ENCODE measurements at regions of chr14 and their contacts with region 1.

Region 1: DNA sequence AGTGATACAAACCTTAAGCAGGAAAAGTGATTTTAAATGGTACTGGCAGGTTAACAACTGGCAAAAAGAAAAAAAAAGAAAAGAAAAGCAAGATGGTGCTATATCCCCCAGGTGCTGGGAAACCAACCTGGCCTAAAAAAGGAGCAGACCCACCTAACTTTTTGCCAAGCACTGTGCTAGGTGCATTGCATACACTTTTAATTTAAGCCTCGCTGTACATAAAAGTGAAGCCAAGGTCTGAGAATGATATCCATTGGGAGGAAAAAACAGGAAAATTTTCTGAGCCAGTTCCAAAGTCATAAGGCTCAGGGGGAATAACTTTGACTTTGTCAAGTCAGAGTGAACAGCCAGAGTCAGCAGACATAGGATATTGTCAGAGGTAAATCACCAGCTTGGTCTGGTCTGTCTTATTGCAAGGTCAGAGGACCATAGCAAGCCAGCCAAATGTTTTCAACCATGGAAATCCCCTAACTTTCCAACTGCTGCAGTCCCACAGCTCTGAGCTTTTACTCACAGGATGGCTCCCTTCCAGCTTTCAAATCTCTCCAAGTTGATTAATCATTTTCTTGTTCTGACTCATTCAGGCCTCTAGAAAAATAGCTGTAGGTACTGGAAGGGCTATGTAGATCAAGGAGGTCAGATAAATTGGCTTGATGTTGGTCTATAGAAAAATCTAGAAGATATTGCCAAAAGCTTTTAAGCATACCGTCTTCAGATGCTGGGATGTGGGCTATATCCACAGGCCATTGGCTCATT is 412.9 kb downstream of the RAD51B start:
- DNase-seq: peak; percentile 73
- H3K4me3 Mint-ChIP-seq: no peak overlapping the region
- H3K27ac Mint-ChIP-seq: no peak overlapping the region
- H3K4me1 Mint-ChIP-seq: peaks cover 18% of the 10 kb centered on the region
- H3K27me3 Mint-ChIP-seq: no peaks in the 10 kb centered on the region

Region 2: GRCh38 chr14:67943947-67944346 is 288.5 kb before region 1 on chr14:
- CTCF ChIA-PET with region 1: interaction called, 4 read pairs
- intact Hi-C with region 1: loop called (anchors 5 kb)
- DNase-seq: peak; percentile 65
- H3K4me3 Mint-ChIP-seq: no peak overlapping the region
- H3K27ac Mint-ChIP-seq: no peak overlapping the region
- H3K4me1 Mint-ChIP-seq: no peaks in the 10 kb centered on the region
- H3K27me3 Mint-ChIP-seq: no peaks in the 10 kb centered on the region

Region 3: DNA sequence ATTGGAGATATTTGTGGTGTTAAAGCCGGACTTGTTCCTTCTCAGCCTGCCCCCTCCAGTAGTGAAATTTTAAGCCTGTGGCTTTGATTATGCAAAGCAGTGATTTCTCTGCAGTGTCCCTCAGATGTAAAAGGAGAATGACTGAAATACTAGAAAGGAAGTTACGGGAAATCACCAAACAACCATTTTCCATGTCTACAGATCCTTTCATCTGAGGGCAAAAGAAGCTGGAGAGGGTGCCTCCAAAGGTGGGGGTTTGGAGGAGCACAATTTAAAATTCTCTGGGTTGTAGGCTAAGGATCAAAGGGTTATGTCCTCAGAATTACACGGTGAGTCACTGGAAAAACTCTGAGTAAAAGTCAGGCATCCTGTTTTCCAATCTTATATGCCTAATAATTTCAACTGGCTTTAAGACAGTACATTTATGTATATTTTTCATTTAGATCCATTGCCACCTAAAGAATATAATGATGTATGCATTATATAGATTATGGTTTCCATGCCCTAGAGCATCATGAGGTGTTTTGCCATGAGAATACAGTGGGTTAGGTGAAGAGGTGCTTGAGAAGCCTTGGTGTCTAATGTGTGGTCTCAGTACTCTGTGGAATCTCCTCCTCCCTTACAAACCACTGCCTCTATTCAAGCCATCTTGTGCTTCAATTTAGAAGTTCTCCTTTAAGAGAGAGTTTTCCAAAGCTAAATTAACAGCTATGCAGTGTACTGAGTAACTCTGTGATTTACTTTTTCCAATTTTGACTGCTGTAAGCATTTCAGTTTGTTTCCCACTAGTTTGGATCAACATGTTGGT is 50.8 kb before region 1 on chr14:
- CTCF ChIA-PET with region 1: no interaction called
- intact Hi-C with region 1: loop called (anchors 1 kb)
- DNase-seq: no peak
- H3K4me3 Mint-ChIP-seq: no peak overlapping the region
- H3K27ac Mint-ChIP-seq: no peak overlapping the region
- H3K4me1 Mint-ChIP-seq: peaks cover 29% of the 10 kb centered on the region
- H3K27me3 Mint-ChIP-seq: no peaks in the 10 kb centered on the region

Region 4: DNA sequence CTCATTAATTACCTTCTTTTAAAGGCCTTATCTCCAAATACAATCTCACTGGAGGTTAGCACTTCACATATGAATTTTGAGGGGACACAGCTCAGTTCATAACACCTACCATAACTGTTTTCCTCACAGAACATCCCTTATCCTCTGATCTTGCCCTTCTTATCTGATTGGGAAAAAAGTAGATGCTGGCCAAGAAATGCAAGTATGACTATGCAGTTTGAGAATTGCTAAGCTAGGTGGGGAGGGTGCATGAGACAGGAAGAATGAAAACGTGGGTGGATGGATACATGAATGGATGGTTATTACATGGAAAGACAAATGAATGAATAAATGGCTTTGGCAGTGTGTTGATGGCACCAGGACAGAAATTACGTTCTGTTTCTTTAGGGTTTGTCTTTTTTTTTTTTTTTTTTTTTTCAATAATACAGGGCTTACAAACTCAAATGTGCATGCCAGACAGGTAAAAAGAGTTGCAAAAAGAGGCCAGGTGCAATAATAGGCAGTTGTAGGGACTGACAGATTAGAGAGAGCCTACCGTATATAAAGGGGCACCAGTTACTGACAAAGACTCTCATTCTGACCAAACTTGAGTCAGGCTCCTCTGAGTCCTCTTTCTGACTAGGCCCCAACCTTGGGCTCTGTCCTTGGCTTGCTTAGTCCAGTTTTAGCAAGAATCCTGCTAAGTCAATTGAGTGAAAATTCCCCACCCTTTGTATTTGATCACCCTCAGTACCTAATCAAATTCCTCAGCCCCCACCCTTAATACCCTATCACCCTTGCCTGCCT is 255.5 kb after region 1 on chr14:
- CTCF ChIA-PET with region 1: no interaction called
- intact Hi-C with region 1: no loop called
- DNase-seq: no peak
- H3K4me3 Mint-ChIP-seq: no peak overlapping the region
- H3K27ac Mint-ChIP-seq: no peak overlapping the region
- H3K4me1 Mint-ChIP-seq: peaks cover 38% of the 10 kb centered on the region
- H3K27me3 Mint-ChIP-seq: no peaks in the 10 kb centered on the region